Activated naive CD4-positive, alpha-beta T cell treated with anti-CD3 and anti-CD28 coated beads, Interleukin-2, amount 10 ng/mL, durations not matched to agents 7 days and 5 days (primary cell): ENCODE measurements at regions of chrX and their contacts with region 1.

Region 1: DNA sequence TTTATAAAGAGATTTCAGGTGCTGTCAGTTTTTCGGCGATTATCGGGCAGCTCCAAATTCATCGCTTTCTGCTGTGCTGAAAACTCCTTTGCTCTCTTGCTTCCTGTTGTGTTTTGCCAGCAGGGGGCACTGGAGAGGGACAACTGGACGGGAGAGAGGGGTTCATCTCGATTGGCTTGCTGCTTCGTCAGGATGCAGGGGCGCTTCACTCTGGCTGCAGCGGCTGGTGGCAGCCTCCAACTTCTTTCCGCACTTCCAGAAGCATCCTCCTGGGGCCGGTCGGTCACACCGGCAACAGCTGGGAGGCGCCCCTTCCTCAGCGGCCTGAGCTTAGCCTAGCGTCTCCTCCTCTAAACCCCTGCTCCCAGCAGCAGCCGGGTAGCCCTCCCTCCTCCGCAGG is 29.5 kb downstream of the MSL3 start:
- DNase-seq: peak; percentile 82
- H3K4me3 Mint-ChIP-seq: peak overlapping the region; percentile 61
- H3K27ac Mint-ChIP-seq: peak overlapping the region; percentile 24
- H3K4me1 Mint-ChIP-seq: peaks cover 38% of the 10 kb centered on the region
- H3K27me3 Mint-ChIP-seq: no peaks in the 10 kb centered on the region

Region 2: GRCh38 chrX:11461201-11462001 is 326.2 kb before region 1 on chrX:
- CTCF ChIA-PET with region 1: no interaction called
- DNase-seq: no peak
- H3K4me3 Mint-ChIP-seq: no peak overlapping the region
- H3K27ac Mint-ChIP-seq: peak overlapping the region; percentile 19
- H3K4me1 Mint-ChIP-seq: no peaks in the 10 kb centered on the region
- H3K27me3 Mint-ChIP-seq: no peaks in the 10 kb centered on the region

Region 3: DNA sequence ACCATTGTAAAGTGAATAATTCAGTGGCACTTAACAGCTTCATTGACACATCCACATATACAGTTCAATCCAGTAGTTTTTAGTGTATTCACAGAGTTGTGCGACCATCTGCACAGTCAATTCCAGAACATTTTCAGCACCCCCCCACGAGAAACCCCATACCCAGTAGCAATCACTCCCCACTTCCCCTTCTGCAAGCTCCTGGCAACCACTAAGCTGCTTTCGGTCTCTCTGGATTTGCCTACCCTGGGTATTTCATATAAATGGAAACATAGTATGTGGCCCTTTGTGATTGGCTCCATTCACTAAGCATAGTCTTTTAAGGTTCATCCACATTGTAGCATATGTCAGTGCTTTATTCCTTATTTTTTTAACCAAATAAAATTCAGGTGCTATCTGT is 19.5 kb before region 1 on chrX:
- CTCF ChIA-PET with region 1: interaction called, 11 read pairs
- DNase-seq: no peak
- H3K4me3 Mint-ChIP-seq: no peak overlapping the region
- H3K27ac Mint-ChIP-seq: peak overlapping the region; percentile 87
- H3K4me1 Mint-ChIP-seq: peaks cover 69% of the 10 kb centered on the region
- H3K27me3 Mint-ChIP-seq: no peaks in the 10 kb centered on the region

Region 4: GRCh38 chrX:11908371-11908770 is 120.8 kb after region 1 on chrX:
- CTCF ChIA-PET with region 1: interaction called, 12 read pairs
- DNase-seq: peak; percentile 35
- H3K4me3 Mint-ChIP-seq: no peak overlapping the region
- H3K27ac Mint-ChIP-seq: no peak overlapping the region
- H3K4me1 Mint-ChIP-seq: peaks cover 11% of the 10 kb centered on the region
- H3K27me3 Mint-ChIP-seq: peaks cover 5% of the 10 kb centered on the region